Breast epithelium (tissue), 4 donors: ENCODE measurements at regions of chr17 and their contacts with region 1.

Region 1: GRCh38 chr17:77349976-77350830 is 209.4 kb downstream of the SEC14L1 start:
- DNase-seq: peak in 1 of 2 donors; percentile 27
- H3K4me3 ChIP-seq: no peak overlapping the region
- H3K27ac ChIP-seq: peak overlapping the region; percentile 50 to 89
- H3K4me1 ChIP-seq: peaks cover 0 to 5% of the 10 kb centered on the region in 2 donors
- H3K27me3 ChIP-seq: no peaks in the 10 kb centered on the region
- CTCF ChIP-seq: no peak
- POLR2A ChIP-seq: no peak

Region 2: DNA sequence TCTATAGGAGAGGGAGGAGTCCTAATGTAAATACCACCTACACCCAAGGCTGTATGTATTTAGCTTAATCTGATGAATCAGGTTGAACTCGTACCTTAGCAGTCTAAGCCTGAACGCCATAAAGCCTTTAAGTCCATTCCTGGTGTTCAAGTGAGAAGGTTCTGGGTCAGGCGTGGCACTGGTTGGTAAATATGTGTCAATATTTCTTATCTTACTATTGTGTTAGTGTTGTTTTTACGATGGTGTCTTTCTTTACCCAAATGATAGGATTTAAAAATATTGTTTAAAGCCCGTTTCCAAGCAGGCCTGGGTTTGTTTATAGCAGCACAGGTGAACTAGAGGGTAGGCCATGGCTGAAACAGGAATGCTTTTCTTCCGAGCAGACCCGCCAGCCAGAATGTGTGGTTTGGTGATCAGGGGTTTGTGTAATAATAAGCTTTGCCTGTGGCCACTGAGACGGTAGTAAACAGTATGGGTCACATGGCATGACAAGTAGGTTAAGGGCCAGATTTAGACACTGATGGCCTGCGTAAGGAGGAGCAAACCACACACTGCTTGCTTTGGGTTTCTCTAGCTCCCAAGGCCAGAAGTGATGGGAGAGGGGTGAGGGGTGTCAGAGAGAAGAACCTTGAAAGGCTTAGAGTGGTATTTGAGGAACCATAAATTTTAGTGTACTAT is 1890.5 kb before region 1 on chr17:
- intact Hi-C with region 1: loop called (anchors 10 kb)
- DNase-seq: peak; percentile 59 to 61
- H3K4me3 ChIP-seq: peak overlapping the region in 1 of 3 donors; percentile 10
- H3K27ac ChIP-seq: peak overlapping the region; percentile 91 to 92
- H3K4me1 ChIP-seq: peaks cover 0 to 9% of the 10 kb centered on the region in 2 donors
- H3K27me3 ChIP-seq: no peaks in the 10 kb centered on the region
- CTCF ChIP-seq: no peak
- POLR2A ChIP-seq: no peak

Region 3: DNA sequence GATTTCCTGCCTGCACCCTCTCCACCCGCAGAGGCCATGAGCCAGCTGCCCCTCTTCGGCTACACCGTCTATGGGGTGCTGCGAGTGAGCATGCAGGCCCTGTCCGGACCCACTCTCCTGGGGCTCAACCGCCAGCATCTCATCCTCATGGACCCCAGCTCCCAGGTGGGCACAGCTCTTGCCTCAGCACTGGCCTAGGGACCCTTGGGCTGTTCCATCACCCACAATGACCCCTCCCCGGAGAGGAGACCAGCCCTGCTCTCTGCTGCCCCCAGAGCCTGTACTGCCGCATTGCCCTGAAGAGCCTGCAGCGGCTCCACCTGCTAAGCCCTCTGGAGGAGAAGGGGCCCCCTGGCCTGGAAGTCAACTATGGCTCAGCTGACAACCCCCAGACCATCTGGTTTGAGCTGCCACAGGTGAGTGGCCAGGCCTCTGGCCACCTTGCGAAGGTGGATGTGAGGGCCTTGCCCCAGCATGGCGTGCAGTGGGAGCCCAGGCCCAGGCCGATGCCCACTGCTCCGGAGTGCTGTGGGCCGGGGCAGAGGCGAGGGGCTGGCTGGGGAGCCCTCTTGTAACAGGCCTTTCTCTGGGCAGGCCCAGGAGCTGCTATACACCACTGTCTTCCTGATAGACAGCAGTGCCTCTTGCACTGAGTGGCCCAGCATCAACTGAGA is 1724.3 kb before region 1 on chr17:
- intact Hi-C with region 1: no loop called
- DNase-seq: no peak
- H3K4me3 ChIP-seq: no peak overlapping the region
- H3K27ac ChIP-seq: no peak overlapping the region
- H3K4me1 ChIP-seq: no peaks in the 10 kb centered on the region
- H3K27me3 ChIP-seq: no peaks in the 10 kb centered on the region
- CTCF ChIP-seq: peak in 1 of 3 donors; percentile 22
- POLR2A ChIP-seq: no peak

Region 4: DNA sequence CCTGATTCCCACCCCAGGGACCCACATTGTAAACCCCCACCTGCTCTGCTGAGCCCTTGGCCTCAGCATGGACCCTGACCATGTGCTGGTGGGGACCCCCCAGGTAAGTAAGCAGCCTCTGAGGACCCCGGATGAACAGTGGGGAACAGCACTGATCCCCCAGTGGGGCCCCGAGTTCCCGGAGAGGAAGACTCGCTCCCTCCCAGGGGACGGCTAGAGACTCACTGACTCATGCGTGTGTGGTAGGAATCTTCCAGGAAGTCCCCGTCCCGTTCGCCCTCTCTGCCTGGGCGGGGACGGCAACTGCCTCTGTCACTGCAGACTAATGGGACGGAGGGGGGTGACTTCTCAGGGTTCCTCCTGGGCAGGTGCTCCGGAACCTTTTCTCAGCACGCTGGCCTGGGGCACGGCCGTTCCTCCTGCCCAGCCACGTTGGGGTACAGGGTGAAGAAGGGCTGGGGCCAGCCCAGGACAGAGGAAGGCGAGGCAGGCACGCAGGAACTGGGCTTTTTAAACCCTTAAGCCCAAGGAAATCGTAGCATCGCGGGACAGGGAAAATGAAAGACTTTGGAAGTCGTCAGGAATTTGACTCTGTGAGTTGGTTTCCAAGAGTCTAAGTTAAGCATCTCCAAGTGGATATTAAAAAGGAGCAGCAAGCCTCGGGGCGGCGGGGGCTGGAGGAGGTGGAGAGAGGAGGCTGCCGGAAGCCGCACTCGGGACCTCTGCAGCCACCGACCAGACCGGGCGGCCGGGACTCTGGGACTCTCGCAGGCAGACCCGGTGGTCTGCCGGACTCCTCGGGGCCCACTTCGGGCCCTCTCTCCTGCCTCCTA is 30.8 kb before region 1 on chr17:
- intact Hi-C with region 1: loop called (anchors 1 kb)
- DNase-seq: peak; percentile 92 to 94
- H3K4me3 ChIP-seq: peak overlapping the region; percentile 53 to 79 (median 57)
- H3K27ac ChIP-seq: peak overlapping the region; percentile 99 to 100
- H3K4me1 ChIP-seq: peaks cover 38 to 40% of the 10 kb centered on the region in 2 donors
- H3K27me3 ChIP-seq: no peaks in the 10 kb centered on the region
- CTCF ChIP-seq: peak in 1 of 3 donors; percentile 10
- POLR2A ChIP-seq: peak; percentile 62

Region 5: GRCh38 chr17:77331301-77331864 is 18.8 kb before region 1 on chr17:
- intact Hi-C with region 1: loop called (anchors 1 kb)
- DNase-seq: peak; percentile 90 to 93
- H3K4me3 ChIP-seq: peak overlapping the region in 2 of 3 donors; percentile 11 to 32
- H3K27ac ChIP-seq: peak overlapping the region; percentile 13 to 61
- H3K4me1 ChIP-seq: peaks cover 0 to 3% of the 10 kb centered on the region in 2 donors
- H3K27me3 ChIP-seq: no peaks in the 10 kb centered on the region
- CTCF ChIP-seq: peak; percentile 94 to 98 (median 94)
- POLR2A ChIP-seq: no peak

Region 6: GRCh38 chr17:77391668-77392375 is 41.6 kb after region 1 on chr17:
- intact Hi-C with region 1: no loop called
- DNase-seq: peak in 1 of 2 donors; percentile 87
- H3K4me3 ChIP-seq: peak overlapping the region in 1 of 3 donors; percentile 23
- H3K27ac ChIP-seq: peak overlapping the region; percentile 85 to 92
- H3K4me1 ChIP-seq: peaks cover 29 to 64% of the 10 kb centered on the region in 2 donors
- H3K27me3 ChIP-seq: no peaks in the 10 kb centered on the region
- CTCF ChIP-seq: no peak
- POLR2A ChIP-seq: no peak

Region 7: DNA sequence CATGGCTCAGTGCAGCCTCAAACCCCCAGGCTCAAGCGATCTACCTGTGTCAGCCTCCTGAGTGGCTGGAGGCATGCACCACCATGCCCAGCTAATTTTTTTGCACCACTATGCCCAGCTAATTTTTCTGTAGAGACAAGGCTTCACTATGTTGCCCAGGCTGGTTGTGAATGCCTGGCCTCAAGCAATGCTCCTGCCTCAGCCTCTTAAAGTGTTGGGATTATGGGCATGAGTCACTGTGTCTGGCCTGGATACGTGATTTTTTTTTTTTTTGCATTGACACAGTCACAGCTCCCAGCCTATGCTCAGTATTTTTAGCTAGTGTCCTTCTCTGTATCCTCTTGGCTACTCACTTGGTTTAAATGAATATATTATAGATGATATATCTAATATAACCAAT is 231.3 kb after region 1 on chr17:
- intact Hi-C with region 1: no loop called
- DNase-seq: no peak
- H3K4me3 ChIP-seq: no peak overlapping the region
- H3K27ac ChIP-seq: no peak overlapping the region
- H3K4me1 ChIP-seq: no peaks in the 10 kb centered on the region
- H3K27me3 ChIP-seq: no peaks in the 10 kb centered on the region
- CTCF ChIP-seq: no peak
- POLR2A ChIP-seq: no peak